ENCODE measurements at regions of chr12 and their contacts with region 1.

Region 1: DNA sequence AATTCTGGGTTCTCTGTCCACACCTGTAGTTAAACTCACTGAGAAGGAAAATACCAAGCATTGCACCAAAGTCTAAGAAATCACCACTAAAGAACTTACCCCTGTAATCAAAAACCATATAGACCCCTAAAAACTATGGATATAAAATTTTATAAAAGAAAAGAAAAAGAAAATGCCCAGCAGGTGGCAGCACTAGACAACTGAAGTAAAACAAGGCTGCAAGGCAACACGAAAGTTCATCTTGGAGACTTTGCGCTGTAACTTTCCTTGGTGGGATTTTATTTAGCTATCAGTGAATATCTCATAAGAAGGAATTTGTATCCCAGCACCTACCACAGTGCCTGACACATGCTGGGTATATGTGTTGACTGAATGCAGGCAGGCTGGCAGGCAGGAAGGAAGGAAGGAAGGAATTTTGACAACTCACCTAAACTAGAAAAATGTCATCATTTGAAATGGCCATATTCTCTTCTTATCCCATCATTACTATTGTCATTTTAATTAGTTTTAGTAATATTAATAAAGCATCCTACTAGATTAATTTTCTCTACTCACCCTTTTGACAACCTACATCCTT is 68.2 kb upstream of the ETV6 start:
- DNase-seq: peak in 1 of 2 donors; percentile 18
- ATAC-seq: peak in 3 of 4 donors; percentile 41 to 63 (median 56)
- H3K4me3 ChIP-seq: no peak overlapping the region
- H3K27ac ChIP-seq: no peak overlapping the region
- H3K4me1 ChIP-seq: no peaks in the 10 kb centered on the region
- H3K27me3 ChIP-seq: no peaks in the 10 kb centered on the region
- CTCF ChIP-seq: peak; percentile 77

Region 2: DNA sequence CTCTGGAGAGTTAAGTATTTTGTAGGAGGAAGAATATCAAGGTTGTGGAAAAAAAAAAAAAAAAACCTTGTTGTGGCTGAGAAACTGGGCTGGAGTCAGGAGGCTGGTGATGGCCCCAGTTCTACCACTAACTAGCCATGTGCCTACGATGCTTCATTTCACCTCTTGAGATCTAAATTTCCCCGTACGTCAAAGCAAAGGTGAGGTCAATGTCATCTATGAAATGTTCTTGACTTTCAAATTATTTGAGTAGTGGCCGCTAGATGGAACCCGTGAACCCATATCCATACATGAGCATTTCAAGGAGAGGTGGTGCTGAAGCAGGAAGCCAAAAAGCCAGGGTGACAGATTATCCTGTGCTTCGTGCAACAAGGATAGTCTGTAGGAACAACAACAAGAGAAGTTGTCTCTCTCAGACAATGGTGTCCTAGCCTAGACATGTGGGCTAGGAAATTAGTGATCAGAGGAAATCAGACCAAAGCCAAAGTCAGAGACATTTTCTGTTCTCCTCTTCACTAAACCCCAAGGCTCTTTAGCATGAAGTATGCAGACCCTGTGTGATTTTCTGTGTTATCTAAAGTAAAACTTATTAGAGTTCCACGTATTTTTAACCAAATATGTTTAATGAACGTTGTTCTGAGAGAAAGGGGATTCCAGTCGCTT is 27.3 kb before region 1 on chr12:
- intact Hi-C with region 1: no loop called
- DNase-seq: no peak
- ATAC-seq: no peak
- H3K4me3 ChIP-seq: no peak overlapping the region
- H3K27ac ChIP-seq: no peak overlapping the region
- H3K4me1 ChIP-seq: no peaks in the 10 kb centered on the region
- H3K27me3 ChIP-seq: no peaks in the 10 kb centered on the region
- CTCF ChIP-seq: peak; percentile 42

Region 3: DNA sequence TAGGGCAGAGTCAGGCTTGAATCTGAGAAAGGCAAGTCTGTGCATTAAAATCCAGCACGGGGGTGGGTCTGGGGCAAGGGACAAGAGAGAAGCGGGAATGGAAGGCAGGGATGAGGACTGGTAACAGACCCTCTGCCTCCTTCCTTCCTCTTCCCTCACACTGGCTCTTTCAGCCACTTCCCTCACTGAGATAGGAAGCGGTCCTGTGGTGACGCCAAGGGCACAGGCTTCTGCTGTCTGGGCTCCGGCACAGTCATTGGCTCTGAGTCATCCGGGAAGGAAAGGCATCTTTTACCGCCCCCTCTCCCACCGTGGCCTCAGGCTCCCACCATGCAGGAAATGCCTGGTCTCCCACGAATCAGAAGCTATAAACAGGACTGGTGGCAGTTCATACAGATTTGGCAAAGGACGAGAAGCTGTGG is 138.4 kb after region 1 on chr12:
- intact Hi-C with region 1: loop called in 1 of 2 experiments (anchors 10 kb)
- DNase-seq: peak; percentile 50 to 60
- ATAC-seq: peak in 3 of 4 donors; percentile 32 to 46 (median 34)
- H3K4me3 ChIP-seq: no peak overlapping the region
- H3K27ac ChIP-seq: no peak overlapping the region
- H3K4me1 ChIP-seq: peaks cover 35% of the 10 kb centered on the region
- H3K27me3 ChIP-seq: no peaks in the 10 kb centered on the region
- CTCF ChIP-seq: no peak

Region 4: DNA sequence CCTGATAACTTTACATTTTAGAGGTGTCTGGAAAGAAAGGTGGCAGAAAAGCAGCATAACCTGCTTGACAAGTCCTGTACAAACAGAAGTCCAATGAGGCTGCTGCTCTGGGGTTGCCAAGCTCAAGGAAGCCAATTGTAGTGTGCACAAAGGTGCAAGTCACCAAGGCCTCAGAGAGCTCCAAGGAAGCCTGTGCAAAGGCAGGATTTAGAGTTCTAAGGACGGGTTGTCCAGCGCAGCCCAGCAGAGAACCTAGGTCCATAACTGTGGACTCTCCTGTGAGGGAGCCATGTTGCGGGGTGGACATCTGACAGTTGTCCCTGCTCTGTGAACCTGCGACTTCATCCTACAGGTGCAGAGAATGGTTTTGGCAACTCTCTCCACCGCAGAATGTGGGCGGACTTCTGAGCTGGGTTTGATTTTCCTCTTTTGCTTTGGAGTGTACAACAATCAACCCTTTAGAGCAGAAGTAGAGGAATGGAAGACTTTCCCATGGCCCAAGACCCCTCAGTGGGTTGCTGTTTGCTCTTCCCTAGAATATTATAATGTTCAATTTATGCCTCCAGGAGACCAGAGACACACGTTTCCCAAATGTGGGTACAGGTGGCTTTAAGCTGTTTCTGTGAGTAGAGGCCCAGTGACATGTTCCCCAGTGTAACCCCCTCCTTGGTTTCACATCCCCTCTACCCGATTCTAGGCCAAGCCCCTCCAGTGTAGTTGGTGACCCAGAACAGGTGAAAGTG is 149.2 kb after region 1 on chr12:
- intact Hi-C with region 1: no loop called
- DNase-seq: no peak
- ATAC-seq: no peak
- H3K4me3 ChIP-seq: no peak overlapping the region
- H3K27ac ChIP-seq: no peak overlapping the region
- H3K4me1 ChIP-seq: no peaks in the 10 kb centered on the region
- H3K27me3 ChIP-seq: no peaks in the 10 kb centered on the region
- CTCF ChIP-seq: no peak

Region 5: GRCh38 chr12:11891754-11892386 is 310.6 kb after region 1 on chr12:
- intact Hi-C with region 1: loop called (anchors 5 to 10 kb)
- DNase-seq: no peak
- ATAC-seq: peak in 1 of 4 donors; percentile 40
- H3K4me3 ChIP-seq: no peak overlapping the region
- H3K27ac ChIP-seq: no peak overlapping the region
- H3K4me1 ChIP-seq: peaks cover 4% of the 10 kb centered on the region
- H3K27me3 ChIP-seq: no peaks in the 10 kb centered on the region
- CTCF ChIP-seq: peak; percentile 31

Region 6: DNA sequence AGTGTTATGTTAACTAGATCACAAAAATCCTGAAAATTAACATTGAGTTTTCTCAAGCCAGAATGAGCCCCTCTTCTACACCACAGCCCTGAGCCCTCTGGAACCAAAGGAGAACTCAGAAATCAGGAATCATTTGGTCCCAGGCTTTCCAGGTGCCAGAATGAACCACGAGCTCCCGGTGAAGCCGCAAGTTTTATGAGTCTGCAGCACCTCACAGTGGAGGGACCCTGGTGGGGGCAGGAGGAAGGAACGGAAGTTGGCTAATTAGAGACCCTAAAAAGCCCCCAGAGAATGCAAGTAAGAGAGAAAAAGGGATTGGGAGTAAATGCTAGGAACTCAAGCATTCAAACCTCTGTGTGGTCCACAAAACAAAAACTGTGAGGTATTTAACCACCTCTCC is 436.5 kb after region 1 on chr12:
- intact Hi-C with region 1: loop called in 1 of 2 experiments (anchors 5 kb)
- DNase-seq: no peak
- ATAC-seq: peak in 1 of 4 donors; percentile 58
- H3K4me3 ChIP-seq: no peak overlapping the region
- H3K27ac ChIP-seq: no peak overlapping the region
- H3K4me1 ChIP-seq: peaks cover 11% of the 10 kb centered on the region
- H3K27me3 ChIP-seq: no peaks in the 10 kb centered on the region
- CTCF ChIP-seq: peak; percentile 31

Region 7: DNA sequence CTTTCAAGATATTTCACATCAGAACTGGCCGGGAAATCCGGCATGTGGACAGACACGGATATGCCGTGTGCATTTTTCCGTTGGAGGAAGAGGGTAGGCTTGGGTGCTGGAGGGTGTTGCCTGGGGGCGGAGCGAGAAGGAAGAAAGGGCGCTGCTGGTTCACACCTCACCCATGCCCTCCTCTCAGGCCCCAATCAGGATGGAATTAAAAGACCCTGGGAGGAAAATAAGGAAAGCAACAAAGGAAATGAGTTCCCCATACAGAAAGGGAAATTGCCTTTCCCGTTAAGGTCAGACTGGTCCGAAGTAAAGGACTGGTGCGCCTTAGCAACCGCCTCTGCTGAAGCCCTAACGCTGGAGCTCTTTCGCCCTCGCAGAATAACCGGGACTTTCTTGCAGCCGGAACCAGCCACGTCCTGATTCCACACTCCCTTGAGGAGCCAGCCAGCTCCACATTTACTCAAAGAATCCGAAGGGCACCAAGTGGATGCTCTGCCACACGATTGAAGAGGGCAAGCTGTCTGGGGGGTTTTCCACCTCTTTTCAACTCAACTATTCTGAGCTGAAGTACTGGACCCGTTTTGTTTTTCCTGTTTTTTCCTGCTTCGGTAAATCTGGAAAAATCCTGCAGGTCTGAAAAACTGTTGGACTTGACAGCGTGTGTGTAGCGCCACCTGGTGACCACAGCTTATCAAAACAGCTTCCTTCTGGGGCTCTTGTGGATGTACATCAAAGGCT is 451.8 kb after region 1 on chr12:
- intact Hi-C with region 1: loop called (anchors 1 to 2 kb)
- DNase-seq: peak; percentile 62 to 85
- ATAC-seq: peak; percentile 81 to 89 (median 84)
- H3K4me3 ChIP-seq: peak overlapping the region; percentile 60
- H3K27ac ChIP-seq: no peak overlapping the region
- H3K4me1 ChIP-seq: no peaks in the 10 kb centered on the region
- H3K27me3 ChIP-seq: no peaks in the 10 kb centered on the region
- CTCF ChIP-seq: peak; percentile 91

Region 8: DNA sequence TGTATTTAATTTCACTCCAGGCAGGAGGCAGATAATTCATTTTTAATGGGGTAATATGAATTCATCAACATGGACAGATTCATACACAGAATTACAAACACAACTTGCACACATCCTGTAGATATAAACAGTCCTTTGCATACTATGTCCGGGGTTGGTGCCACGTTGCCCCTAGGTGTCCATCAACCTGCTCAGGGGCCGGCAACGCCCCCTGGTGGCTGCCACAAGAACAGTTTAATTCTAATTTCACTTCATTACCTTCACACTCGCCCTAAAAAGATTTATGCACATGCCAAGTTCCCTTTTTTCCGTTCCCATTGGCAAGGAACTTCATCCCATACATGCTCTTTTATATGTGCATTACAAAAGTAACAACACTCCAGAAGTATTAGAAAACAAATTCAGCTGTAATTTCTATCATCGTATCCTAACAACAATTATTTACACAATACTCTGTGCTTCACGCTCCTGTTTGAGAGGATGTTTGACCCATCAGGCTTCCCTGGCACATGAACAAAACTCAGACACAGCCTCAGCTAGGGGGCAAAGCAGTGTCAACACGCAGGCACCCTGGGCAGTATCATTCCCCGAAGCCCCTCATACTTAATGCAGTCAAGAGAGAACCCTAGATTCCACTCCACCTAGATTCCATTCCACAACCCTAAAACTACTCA is 753.2 kb after region 1 on chr12:
- intact Hi-C with region 1: loop called in 1 of 2 experiments (anchors 10 kb)
- DNase-seq: peak; percentile 32 to 73
- ATAC-seq: peak; percentile 60 to 88 (median 73)
- H3K4me3 ChIP-seq: no peak overlapping the region
- H3K27ac ChIP-seq: no peak overlapping the region
- H3K4me1 ChIP-seq: no peaks in the 10 kb centered on the region
- H3K27me3 ChIP-seq: no peaks in the 10 kb centered on the region
- CTCF ChIP-seq: peak; percentile 86

Region 9: GRCh38 chr12:12442548-12443071 is 861.3 kb after region 1 on chr12:
- intact Hi-C with region 1: no loop called
- DNase-seq: no peak
- ATAC-seq: peak; percentile 27 to 68 (median 64)
- H3K4me3 ChIP-seq: no peak overlapping the region
- H3K27ac ChIP-seq: peak overlapping the region; percentile 59
- H3K4me1 ChIP-seq: peaks cover 26% of the 10 kb centered on the region
- H3K27me3 ChIP-seq: no peaks in the 10 kb centered on the region
- CTCF ChIP-seq: no peak

Measured in psoas muscle (tissue), 8 donors.